Activated CD8-positive, alpha-beta T cell treated with anti-CD3 and anti-CD28 coated beads for 36 hours (primary cell): ENCODE measurements at regions of chr9 and their contacts with region 1.

Region 1: GRCh38 chr9:6931913-6932312 is 174.1 kb downstream of the KDM4C start:
- DNase-seq: peak; percentile 87
- ATAC-seq: peak; percentile 100
- H3K4me3 Mint-ChIP-seq: no peak overlapping the region
- H3K27ac Mint-ChIP-seq: peak overlapping the region; percentile 88
- H3K4me1 Mint-ChIP-seq: peaks cover 39% of the 10 kb centered on the region
- H3K27me3 Mint-ChIP-seq: no peaks in the 10 kb centered on the region
- CTCF ChIP-seq: no peak

Region 2: GRCh38 chr9:6894135-6894534 is 37.8 kb before region 1 on chr9:
- CTCF ChIA-PET with region 1: no interaction called
- POLR2A ChIA-PET with region 1: no interaction called
- intact Hi-C with region 1: loop called (anchors 2 kb)
- DNase-seq: peak; percentile 63
- ATAC-seq: peak; percentile 86
- H3K4me3 Mint-ChIP-seq: peak overlapping the region; percentile 24
- H3K27ac Mint-ChIP-seq: peak overlapping the region; percentile 70
- H3K4me1 Mint-ChIP-seq: peaks cover 49% of the 10 kb centered on the region
- H3K27me3 Mint-ChIP-seq: no peaks in the 10 kb centered on the region
- CTCF ChIP-seq: no peak